HepG2 (cell line): ENCODE measurements at regions of chr2 and their contacts with region 1.

Region 1: GRCh38 chr2:99242151-99242550 is 13.3 kb downstream of the LYG2 start:
- DNase-seq: no peak
- ATAC-seq: no peak
- H3K4me3 ChIP-seq: no peak overlapping the region
- H3K27ac ChIP-seq: no peak overlapping the region
- H3K4me1 ChIP-seq: peaks cover 11% of the 10 kb centered on the region
- H3K27me3 ChIP-seq: no peaks in the 10 kb centered on the region
- CTCF ChIP-seq: no peak
- EP300 ChIP-seq: no peak
- POLR2A ChIP-seq: no peak
- RAD21 ChIP-seq: no peak

Region 2: DNA sequence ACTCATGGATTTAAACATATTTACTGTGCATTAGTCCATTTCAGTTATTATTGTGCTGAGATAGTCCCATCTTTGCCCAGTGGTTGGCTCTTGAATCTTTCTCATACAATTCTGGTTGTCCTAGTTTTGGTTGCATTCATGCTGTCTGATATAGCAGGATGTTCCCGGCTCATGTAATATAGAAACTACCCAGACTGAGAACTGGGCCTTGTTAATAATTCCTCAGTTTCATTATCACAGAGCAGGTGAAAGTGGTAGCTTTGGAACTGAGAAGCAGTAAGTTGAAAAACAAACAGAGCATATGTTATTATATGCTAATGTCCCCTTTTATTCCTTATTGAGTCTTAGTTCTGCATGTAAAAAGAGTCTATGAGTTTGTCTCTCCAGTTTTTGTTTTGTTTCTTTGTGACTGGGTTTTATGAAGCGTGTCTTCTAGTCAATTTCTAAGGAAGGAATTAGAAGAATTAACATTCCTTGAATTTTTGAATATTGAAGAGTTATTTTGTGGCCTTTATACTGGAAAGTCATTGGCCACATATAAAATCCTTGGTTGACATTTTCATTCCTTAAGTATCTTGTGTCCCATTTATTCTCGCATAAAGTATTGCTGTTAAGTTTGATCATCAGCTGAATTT is 138.3 kb after region 1 on chr2:
- CTCF ChIA-PET with region 1: no interaction called
- POLR2A ChIA-PET with region 1: no interaction called
- in situ Hi-C with region 1: no loop called
- intact Hi-C with region 1: loop called (anchors 10 kb)
- DNase-seq: no peak
- ATAC-seq: no peak
- H3K4me3 ChIP-seq: no peak overlapping the region
- H3K27ac ChIP-seq: no peak overlapping the region
- H3K4me1 ChIP-seq: peaks cover 15% of the 10 kb centered on the region
- H3K27me3 ChIP-seq: no peaks in the 10 kb centered on the region
- CTCF ChIP-seq: no peak
- EP300 ChIP-seq: no peak
- POLR2A ChIP-seq: no peak
- RAD21 ChIP-seq: no peak